ENCODE measurements at regions of chr12 and their contacts with region 1.

Region 1: GRCh38 chr12:15546102-15546701 is 223.9 kb downstream of the PTPRO start:
- DNase-seq: peak; percentile 80
- H3K4me3 Mint-ChIP-seq: peak overlapping the region; percentile 58
- H3K27ac Mint-ChIP-seq: peak overlapping the region; percentile 87
- H3K4me1 Mint-ChIP-seq: peaks cover 42% of the 10 kb centered on the region
- H3K27me3 Mint-ChIP-seq: no peaks in the 10 kb centered on the region

Region 2: DNA sequence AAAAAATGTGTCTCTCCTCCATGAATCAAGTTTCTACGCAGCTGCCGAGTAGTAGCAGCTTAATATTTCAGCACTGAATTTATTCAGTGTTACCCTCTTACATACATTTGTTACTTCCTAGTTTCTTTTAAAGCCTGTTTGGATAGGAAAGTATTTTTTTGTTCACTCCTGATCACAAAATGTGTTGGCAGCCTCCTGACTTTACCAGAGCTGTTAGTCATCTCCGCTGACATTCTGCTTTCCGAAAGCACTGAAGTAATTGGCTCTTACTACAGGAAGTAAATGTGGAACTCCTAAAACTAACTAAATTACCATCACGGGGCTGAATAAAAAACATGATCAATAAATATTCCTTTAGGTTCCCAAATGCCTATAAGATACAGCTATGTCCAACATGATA is 17.5 kb after region 1 on chr12:
- intact Hi-C with region 1: loop called (anchors 1 kb)
- DNase-seq: peak; percentile 80
- H3K4me3 Mint-ChIP-seq: peak overlapping the region; percentile 82
- H3K27ac Mint-ChIP-seq: peak overlapping the region; percentile 94
- H3K4me1 Mint-ChIP-seq: peaks cover 65% of the 10 kb centered on the region
- H3K27me3 Mint-ChIP-seq: no peaks in the 10 kb centered on the region

Region 3: DNA sequence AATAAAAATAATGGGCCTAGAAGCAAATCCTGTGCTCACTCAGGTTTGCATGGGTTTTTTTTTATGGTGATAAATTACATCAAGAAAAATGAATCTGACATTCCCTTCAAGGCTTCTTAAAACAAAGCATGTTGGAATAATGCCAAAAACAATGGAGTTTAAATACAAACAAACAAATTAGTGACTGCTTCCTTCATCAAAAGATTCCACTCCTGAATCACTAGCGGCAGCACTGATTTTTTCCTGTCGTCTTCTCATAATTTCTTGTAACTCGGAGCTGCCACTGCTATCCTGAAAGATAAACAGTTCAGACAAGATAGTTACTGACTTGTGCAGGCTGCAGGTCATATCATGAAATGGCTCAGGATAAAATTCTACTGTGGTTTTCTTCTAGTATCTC is 74.9 kb after region 1 on chr12:
- intact Hi-C with region 1: no loop called
- DNase-seq: no peak
- H3K4me3 Mint-ChIP-seq: no peak overlapping the region
- H3K27ac Mint-ChIP-seq: no peak overlapping the region
- H3K4me1 Mint-ChIP-seq: no peaks in the 10 kb centered on the region
- H3K27me3 Mint-ChIP-seq: peaks cover 9% of the 10 kb centered on the region

Region 4: DNA sequence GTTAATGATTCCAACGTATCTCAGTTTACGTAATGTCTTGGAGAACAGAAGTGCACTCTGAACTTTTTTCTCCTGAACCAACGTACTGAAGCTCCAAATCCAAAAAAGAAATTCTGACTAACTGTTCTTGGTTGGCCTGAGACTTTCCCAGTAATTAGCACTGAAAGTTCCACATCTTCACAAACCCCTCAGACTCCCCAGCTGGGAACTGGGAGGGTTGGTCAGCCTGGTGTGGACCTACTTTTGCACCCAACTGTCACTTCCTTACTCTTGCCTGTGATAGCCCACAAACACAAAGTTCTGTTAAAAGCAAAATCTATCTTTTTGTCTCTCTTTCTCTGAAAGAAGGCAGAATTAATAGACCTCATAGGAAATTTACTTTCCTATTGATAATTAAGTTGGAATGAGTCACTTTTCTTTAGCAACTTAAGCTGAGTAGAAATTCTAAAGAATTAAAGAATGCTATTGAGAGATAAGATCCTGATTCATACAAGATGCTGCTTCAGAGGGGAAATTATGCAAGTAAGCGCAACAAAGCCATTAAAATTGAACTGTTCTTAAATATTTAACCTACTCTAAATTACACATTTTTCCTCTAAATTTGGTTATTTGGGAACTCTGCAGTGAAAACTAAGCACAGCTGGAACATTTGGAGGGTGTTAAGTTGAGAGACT is 87.9 kb after region 1 on chr12:
- intact Hi-C with region 1: no loop called
- DNase-seq: no peak
- H3K4me3 Mint-ChIP-seq: no peak overlapping the region
- H3K27ac Mint-ChIP-seq: no peak overlapping the region
- H3K4me1 Mint-ChIP-seq: no peaks in the 10 kb centered on the region
- H3K27me3 Mint-ChIP-seq: peaks cover 13% of the 10 kb centered on the region